Cardiac septum (tissue), 1 donor: ENCODE measurements at regions of chr5 and their contacts with region 1.

Region 1: DNA sequence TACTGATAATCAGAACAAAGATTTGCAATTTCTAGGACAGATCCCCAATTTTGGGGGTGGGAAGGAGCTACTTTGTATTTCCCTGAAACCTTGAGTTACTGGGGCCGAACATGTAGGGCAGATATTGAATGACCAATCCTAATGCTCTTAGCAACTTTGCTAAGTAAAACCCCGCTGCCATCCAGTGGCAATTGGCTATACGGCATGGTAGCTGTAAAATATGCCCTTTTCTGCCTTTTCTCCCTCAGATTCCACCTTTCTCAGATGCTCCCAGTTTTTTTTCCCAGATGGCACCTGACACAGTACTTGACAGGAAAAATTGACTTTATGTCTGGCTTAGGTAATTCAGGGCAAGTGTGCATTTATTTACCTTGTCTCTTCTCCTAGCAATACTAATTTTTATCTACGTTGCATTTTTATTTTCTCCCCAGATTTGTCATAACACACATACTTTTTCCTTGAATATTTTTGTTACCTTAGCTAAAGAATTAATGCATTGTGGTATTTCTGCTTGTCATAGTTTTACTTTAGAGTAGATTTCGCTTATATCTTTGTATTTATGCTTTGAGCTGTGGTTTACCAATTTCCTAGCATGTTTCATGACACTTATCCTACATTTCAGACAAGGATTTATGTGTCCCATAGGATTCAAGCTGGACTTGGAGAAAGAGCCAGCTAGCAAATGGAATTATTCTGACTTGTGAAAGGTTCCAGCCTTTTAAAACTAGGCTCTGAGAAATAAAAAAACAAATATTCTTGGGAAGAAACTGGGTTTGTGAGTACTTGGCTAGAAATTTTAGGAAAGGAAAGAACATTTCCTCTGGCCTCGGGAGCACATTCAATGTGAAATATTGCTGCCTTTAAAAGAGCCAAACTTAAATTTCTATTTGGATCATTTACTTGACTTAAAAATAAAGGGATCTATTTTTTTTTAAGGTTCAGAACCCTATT is 37.4 kb downstream of the PIK3R1 start:
- DNase-seq: no peak

Region 2: DNA sequence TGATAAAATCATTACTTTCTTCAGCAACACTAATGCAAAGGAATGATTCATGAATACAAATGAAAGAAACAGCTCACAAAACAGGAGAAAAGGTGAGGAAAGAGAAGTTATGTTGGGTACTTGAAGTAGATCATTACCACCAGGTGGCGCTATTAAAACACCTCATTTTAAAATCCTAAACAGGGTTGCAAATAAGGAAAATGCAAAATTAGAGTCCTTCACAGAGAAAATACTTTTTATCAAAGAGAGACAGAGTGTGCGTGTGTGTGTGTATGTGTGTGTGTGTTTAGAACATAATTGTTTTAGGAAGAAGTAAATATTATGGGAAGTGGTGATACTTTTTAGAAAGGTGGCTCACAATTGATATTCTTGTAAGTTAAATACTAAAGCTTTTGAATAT is 1006.8 kb before region 1 on chr5:
- intact Hi-C with region 1: loop called (anchors 5 kb)
- DNase-seq: no peak

Region 3: GRCh38 chr5:67493676-67494075 is 759.3 kb before region 1 on chr5:
- intact Hi-C with region 1: loop called (anchors 5 kb)
- DNase-seq: no peak

Region 4: DNA sequence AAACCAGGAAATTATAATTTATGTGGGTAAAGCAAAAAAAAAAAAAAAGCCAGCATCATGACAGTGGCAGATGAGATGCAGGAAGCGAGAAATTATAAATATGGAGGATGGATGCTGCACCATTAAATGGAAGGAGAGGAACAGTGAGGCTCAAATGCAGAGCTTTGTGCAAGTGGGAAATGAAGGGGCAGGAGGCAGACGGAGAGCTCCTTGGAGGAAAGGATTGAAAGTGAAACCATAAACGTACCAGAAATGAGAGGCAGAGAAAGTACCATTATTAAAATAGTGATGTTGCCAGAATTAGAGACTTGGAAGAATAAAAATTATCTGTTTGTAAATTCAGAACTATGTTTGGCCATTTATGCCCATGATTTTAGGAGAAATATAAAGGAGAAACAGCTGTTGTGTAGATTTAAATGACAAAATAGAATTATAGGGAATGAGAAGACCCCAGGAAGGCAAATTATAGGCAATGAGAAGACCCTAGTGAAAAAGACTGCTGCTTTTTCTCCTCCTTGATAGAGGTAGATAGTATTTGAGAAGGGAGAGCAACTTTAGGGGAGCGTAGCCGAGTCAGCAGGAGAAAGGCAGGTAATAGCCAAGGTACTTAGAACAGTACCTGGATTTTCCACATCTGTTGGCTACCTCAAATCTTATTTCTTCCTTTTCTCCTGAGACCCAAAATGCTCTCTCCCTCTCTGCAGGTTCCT is 715.4 kb before region 1 on chr5:
- intact Hi-C with region 1: loop called (anchors 10 kb)
- DNase-seq: no peak

Region 5: GRCh38 chr5:67809589-67809988 is 443.4 kb before region 1 on chr5:
- intact Hi-C with region 1: loop called (anchors 5 kb)
- DNase-seq: no peak

Region 6: GRCh38 chr5:67941614-67942401 is 311.1 kb before region 1 on chr5:
- intact Hi-C with region 1: no loop called
- DNase-seq: no peak

Region 7: DNA sequence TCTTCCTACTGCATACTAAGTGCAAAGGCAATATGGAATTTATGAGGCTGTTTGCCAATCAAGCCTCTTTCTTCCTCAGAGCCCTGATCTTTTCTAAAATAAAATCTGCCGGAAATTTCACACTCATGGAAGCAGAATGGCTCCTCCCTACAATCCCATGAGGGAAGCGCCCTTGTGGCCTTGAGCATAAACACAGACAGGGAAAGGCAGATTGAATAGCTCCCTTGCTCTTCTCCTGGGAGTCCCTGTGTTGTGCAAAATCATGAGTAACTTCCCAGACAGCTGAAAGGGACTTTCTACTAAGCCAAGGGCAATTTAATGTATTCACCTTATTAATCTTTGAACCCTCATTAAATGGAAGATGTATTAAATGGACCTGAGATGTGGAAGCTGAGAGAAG is 263.5 kb before region 1 on chr5:
- intact Hi-C with region 1: loop called (anchors 5 kb)
- DNase-seq: no peak

Region 8: DNA sequence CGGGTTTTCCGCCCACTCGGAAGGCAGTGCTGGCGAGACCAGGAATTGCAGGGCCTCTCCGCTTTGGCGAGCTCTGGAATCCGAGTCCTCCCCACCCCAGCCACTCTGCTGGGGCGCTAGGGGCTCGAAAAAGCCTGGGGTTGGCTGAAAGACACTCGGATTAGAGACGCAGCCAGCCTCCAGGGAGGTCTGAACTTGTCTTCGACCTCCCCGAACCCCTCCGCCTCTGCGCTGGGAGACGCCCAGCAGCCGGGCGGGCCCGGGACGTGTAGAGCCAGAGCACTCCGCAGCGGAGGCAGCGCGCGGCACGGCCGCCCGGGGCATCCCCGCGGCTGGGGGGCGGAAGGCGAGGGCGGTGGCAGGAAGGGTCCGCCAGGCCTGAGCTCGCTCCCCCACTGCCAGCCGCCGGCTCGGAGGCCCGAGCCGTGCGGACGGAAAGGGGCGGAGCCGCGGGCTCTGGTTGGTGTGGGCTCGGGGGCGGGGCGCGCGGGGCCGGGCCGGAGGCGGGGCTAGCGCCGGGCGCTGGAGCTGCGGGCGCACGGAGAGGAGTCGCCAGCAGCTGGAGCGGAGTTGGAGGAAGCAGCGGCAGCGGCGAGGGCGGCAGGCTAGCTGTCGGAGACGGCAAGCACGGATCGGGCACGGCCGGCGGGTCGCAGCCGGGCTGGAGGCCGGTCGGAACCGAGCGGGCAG is 37.6 kb before region 1 on chr5 and contains the start of gene PIK3R1:
- intact Hi-C with region 1: loop called (anchors 5 kb)
- DNase-seq: peak; percentile 98
- total RNA-seq, gene PIK3R1: 166 TPM

Region 9: GRCh38 chr5:68303038-68303738 is 50.2 kb after region 1 on chr5:
- intact Hi-C with region 1: no loop called
- DNase-seq: no peak